H1 (cell line): ENCODE measurements at regions of chr6 and their contacts with region 1.

Region 1: DNA sequence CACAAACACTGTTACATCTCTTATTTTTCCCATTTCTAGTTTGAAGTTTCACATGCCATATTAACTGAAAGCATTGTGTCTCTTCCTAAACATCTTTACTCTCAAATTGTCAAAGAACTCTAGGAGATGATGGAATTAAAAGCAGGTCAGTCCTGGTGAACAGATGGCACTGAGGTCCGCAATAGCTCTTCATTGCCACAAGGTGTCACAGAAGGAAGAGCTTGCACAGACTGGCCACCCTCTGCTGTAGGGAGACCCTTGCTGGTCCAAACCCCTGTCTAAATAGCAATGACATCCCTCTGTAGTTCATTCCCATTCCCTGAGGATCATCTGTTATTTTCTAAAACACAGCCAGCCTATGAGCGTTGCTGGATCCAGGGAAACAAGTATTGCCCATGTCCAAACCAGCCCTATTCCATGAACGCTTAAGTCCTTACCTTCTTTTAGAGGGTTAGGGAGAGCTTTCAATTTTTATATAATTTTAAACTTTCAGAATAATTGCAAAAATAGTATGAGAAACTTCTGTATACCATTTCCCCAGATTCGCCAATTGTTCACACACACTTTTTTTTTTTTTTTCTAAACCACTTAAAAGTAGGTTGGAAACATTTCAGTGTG is 10.1 kb upstream of the HDAC2 start:
- DNase-seq: no peak
- H3K4me3 ChIP-seq: no peak overlapping the region
- H3K27ac ChIP-seq: no peak overlapping the region
- H3K4me1 ChIP-seq: no peaks in the 10 kb centered on the region; a peak in 1 of 7 replicates
- H3K27me3 ChIP-seq: no peaks in the 10 kb centered on the region
- CTCF ChIP-seq: peak; percentile 76 to 87 (median 79)
- EP300 ChIP-seq: no peak
- POLR2A ChIP-seq: no peak
- RAD21 ChIP-seq: peak; percentile 89

Region 2: GRCh38 chr6:113920663-113921267 is 60.3 kb before region 1 on chr6:
- CTCF ChIA-PET with region 1: no interaction called
- POLR2A ChIA-PET with region 1: no interaction called
- DNase-seq: no peak
- H3K4me3 ChIP-seq: no peak overlapping the region
- H3K27ac ChIP-seq: no peak overlapping the region
- H3K4me1 ChIP-seq: no peaks in the 10 kb centered on the region
- H3K27me3 ChIP-seq: peaks cover 0 to 1% (median 0%) of the 10 kb centered on the region in 4 experiments; a peak in 1 of 7 replicates
- CTCF ChIP-seq: no peak
- EP300 ChIP-seq: no peak
- POLR2A ChIP-seq: no peak
- RAD21 ChIP-seq: no peak

Region 3: DNA sequence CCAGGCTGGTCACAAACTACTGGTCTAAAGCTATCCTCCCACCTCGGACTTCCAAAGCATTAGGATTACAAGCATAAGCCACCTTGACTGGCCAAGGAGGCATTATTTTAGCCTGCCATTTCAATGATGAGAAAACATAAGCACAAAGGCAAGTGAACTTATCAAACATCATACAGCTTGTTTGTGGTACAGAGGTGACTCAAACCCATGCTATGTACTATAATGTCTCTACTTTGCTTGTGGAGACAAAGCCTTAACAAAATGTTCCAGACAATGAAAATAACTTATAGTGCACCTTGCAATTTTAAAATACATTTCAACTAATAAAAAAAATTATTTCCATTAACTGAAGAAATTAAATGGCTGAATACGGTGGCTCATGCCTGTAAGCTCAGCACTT is 36.3 kb before region 1 on chr6:
- CTCF ChIA-PET with region 1: no interaction called
- POLR2A ChIA-PET with region 1: no interaction called
- DNase-seq: no peak
- H3K4me3 ChIP-seq: no peak overlapping the region
- H3K27ac ChIP-seq: no peak overlapping the region
- H3K4me1 ChIP-seq: no peaks in the 10 kb centered on the region
- H3K27me3 ChIP-seq: no peaks in the 10 kb centered on the region
- CTCF ChIP-seq: no peak
- EP300 ChIP-seq: no peak
- POLR2A ChIP-seq: no peak
- RAD21 ChIP-seq: no peak

Region 4: GRCh38 chr6:113970805-113971676 is 10.0 kb before region 1 on chr6 and contains the start of gene HDAC2:
- CTCF ChIA-PET with region 1: interaction called, 9 read pairs
- POLR2A ChIA-PET with region 1: interaction called, 12 read pairs
- DNase-seq: peak; percentile 57 to 92
- H3K4me3 ChIP-seq: peak within 1 kb of the TSS; percentile 84 to 99 (median 88)
- H3K27ac ChIP-seq: peak within 1 kb of the TSS; percentile 99
- H3K4me1 ChIP-seq: peaks cover 0 to 9% (median 3%) of the 10 kb centered on the region in 4 experiments; a peak in 2 of 7 replicates
- H3K27me3 ChIP-seq: peaks cover 0 to 3% (median 1%) of the 10 kb centered on the region in 4 experiments; a peak in 2 of 7 replicates
- CTCF ChIP-seq: peak in 2 of 3 experiments; percentile 3 to 20; a peak in 2 of 4 replicates
- EP300 ChIP-seq: peak in 1 of 2 experiments; percentile 98; a peak in 2 of 3 replicates
- POLR2A ChIP-seq: peak; percentile 32 to 40; a peak in 2 of 3 replicates
- RAD21 ChIP-seq: peak; percentile 13 to 29; a peak in 1 of 4 replicates
- total RNA-seq, gene HDAC2: 374 and 383 TPM in 2 replicates

Region 5: DNA sequence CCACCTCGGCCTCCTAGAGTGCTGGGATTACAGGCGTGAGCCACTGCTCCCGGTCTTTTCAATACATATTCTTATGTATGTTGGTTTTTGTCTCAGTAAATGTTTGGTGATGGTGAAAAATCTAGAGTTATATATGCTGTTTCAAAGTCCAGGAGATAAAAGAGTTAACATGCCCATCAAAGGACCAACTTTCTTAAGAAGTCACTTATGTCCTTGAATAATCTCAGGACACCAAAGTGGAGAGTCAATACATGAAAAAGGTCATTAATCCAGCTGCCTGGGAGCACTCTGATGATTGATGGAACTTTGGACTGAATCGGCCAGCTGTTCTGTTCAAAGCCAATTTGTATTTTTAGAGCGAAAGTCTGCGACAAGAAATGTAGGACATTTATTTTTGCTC is 49.7 kb after region 1 on chr6:
- CTCF ChIA-PET with region 1: no interaction called
- POLR2A ChIA-PET with region 1: no interaction called
- DNase-seq: no peak
- H3K4me3 ChIP-seq: no peak overlapping the region
- H3K27ac ChIP-seq: no peak overlapping the region
- H3K4me1 ChIP-seq: no peaks in the 10 kb centered on the region
- H3K27me3 ChIP-seq: no peaks in the 10 kb centered on the region
- CTCF ChIP-seq: no peak
- EP300 ChIP-seq: no peak
- POLR2A ChIP-seq: no peak
- RAD21 ChIP-seq: no peak

Region 6: GRCh38 chr6:114063956-114064355 is 82.9 kb after region 1 on chr6:
- CTCF ChIA-PET with region 1: interaction called, 16 read pairs
- POLR2A ChIA-PET with region 1: interaction called, 3 read pairs
- DNase-seq: no peak
- H3K4me3 ChIP-seq: no peak overlapping the region
- H3K27ac ChIP-seq: no peak overlapping the region
- H3K4me1 ChIP-seq: no peaks in the 10 kb centered on the region
- H3K27me3 ChIP-seq: no peaks in the 10 kb centered on the region
- CTCF ChIP-seq: no peak
- EP300 ChIP-seq: no peak
- POLR2A ChIP-seq: no peak
- RAD21 ChIP-seq: no peak